ENCODE measurements at regions of chr5 and their contacts with region 1.

Region 1: DNA sequence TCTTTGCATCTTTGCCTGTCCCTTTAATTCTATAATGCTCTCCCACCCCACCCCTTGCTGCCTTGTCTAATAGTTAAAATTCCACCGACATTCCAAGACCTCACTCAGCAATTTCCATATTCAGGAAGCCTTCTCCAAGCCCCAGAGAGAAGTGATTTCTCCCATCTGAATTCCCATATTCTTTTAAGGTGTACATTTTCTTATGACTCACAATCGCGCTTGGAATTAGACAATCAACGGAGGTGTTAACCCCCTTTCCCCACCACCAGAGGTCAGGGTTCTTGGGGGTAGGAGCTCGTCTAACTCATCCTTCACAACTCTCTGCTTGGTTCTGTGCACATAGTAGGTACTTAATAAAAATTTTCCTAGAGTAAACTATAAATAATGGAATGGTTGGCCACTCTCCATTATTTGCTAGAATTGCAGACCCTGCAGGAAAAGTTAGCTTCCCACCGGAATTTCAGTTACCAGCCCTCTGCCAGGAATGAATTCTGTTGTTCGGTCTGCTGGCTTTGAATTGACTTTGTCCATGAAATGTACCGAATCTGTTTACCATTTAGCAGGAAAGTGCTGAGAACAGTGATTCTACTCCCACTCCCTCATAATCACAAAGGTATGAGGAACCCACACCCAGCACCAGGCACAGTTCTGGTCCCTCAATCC is 5.0 kb downstream of the KCNIP1 start:
- DNase-seq: no peak
- ATAC-seq: no peak
- H3K4me3 Mint-ChIP-seq: no peak overlapping the region
- H3K27ac Mint-ChIP-seq: no peak overlapping the region
- H3K4me1 Mint-ChIP-seq: peaks cover 15% of the 10 kb centered on the region
- H3K27me3 Mint-ChIP-seq: peaks cover 22% of the 10 kb centered on the region
- CTCF ChIP-seq: 0 out of 2 replicates have a peak, but pooled peaks have one; percentile 23

Region 2: DNA sequence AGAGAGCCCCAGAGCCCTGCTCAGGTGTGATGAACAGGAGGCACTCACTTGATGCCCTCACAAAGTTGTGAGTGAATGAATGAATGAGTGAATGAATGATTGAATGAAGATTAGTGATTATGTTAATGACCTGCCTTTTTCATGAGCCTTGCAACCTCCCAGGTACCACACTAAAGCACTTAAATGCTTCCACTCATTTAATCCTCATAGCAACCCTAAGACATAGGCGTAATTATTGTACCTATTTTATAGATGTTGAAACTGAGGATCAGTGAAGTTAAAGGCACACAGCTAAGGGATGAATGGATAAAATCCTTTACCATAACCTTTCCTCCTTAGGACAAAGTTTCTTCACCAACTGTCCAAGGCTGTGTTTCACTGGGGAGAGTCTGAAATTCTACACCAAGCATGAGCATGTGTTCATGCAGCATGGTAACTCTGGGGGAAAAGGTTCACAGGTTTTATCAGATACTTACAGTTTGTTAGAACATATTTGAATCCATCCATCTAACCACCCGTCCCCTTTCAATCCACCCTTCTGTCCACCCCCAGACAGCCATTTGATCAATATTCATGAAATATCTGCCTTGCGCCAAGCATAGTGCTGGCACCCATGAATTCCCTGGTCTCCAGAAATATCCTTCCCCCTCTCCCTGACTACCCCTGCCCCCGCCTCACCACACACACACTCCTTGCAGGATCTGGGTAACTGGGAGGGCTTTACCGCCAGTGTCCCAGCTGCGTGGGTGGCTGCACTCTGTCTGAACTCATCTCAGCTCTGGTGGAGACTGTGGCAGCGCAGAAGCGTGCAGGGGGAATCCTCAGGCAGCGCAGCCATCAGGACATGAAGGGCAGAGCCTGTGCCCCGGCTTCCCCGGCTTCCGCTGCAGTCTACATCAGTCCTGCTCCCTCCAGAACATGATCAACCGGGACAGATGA is 11.4 kb before region 1 on chr5:
- CTCF ChIA-PET with region 1: interaction called, 13 read pairs
- POLR2A ChIA-PET with region 1: no interaction called
- DNase-seq: no peak
- ATAC-seq: no peak
- H3K4me3 Mint-ChIP-seq: no peak overlapping the region
- H3K27ac Mint-ChIP-seq: no peak overlapping the region
- H3K4me1 Mint-ChIP-seq: peaks cover 9% of the 10 kb centered on the region
- H3K27me3 Mint-ChIP-seq: peaks cover 3% of the 10 kb centered on the region
- CTCF ChIP-seq: no peak

Region 3: DNA sequence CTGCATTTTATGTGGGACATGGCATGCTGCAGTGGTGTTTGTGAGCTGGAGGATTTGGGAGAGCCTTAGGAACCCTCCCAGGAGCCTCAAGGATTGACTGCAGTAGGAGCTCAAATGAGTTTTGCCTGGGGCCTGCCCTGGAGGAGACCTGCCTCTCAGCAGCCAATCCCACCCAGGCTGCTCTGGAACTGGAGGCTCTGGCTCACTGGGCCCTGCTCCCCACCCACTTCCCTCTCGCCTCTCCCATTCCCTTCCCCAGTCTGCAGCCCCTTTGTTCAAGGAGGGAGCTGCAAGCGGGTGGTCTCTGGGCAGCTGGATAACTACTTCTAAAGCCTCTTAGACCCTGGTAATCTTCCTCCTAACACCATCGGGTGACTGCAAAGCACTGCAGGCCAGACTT is 19.2 kb after region 1 on chr5:
- CTCF ChIA-PET with region 1: interaction called, 11 read pairs
- POLR2A ChIA-PET with region 1: interaction called, 3 read pairs
- DNase-seq: no peak
- ATAC-seq: peak; percentile 71
- H3K4me3 Mint-ChIP-seq: no peak overlapping the region
- H3K27ac Mint-ChIP-seq: no peak overlapping the region
- H3K4me1 Mint-ChIP-seq: peaks cover 6% of the 10 kb centered on the region
- H3K27me3 Mint-ChIP-seq: no peaks in the 10 kb centered on the region
- CTCF ChIP-seq: no peak

Region 4: DNA sequence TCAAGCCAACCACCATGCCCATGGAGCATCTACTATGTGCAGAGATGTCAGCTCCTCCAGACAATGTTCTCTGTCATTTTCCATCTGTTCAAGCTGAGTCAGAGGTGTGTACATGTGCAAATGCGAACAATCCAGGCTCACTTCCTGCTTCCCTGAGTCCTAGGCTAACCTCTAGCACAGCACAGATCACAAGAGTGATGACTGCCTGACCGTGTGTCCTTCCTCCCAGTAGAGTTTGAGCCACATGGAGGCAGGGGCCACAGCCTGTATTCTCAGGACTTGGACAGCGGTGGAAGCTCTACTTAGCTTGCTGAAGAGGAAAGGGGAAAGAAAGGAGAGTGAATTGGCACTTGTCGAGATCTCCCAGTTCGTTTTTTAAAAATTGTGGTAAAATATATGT is 82.3 kb after region 1 on chr5:
- CTCF ChIA-PET with region 1: no interaction called
- POLR2A ChIA-PET with region 1: no interaction called
- DNase-seq: no peak
- ATAC-seq: no peak
- H3K4me3 Mint-ChIP-seq: no peak overlapping the region
- H3K27ac Mint-ChIP-seq: no peak overlapping the region
- H3K4me1 Mint-ChIP-seq: no peaks in the 10 kb centered on the region
- H3K27me3 Mint-ChIP-seq: no peaks in the 10 kb centered on the region
- CTCF ChIP-seq: no peak

Region 5: DNA sequence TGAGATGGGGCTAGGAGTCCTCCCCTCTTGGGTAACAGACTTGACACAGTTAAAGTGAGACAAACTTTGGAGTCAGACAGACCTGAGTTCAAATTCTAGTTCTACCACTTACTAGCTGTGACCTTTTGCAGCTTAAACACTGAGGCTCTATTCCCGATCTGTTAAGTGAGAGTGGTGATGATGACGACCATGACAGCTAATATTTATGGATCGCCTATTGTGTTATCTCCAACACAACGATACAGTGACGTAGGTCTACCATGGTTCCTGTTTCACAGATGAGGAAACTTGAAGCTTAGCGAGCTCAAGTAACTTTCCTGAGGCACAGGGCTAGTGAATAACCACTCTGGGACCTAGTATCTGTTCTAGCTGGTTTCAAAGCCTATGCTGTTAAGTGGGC is 164.4 kb after region 1 on chr5:
- CTCF ChIA-PET with region 1: no interaction called
- POLR2A ChIA-PET with region 1: no interaction called
- DNase-seq: no peak
- ATAC-seq: no peak
- H3K4me3 Mint-ChIP-seq: no peak overlapping the region
- H3K27ac Mint-ChIP-seq: no peak overlapping the region
- H3K4me1 Mint-ChIP-seq: no peaks in the 10 kb centered on the region
- H3K27me3 Mint-ChIP-seq: peaks cover 7% of the 10 kb centered on the region
- CTCF ChIP-seq: no peak